Right ventricle myocardium superior (tissue), 1 donor: ENCODE measurements at regions of chr15 and their contacts with region 1.

Region 1: GRCh38 chr15:58749532-58750337 is at the start of gene ADAM10:
- DNase-seq: peak; percentile 99
- ATAC-seq: peak; percentile 98
- total RNA-seq, gene ADAM10: 69.7 TPM

Region 2: DNA sequence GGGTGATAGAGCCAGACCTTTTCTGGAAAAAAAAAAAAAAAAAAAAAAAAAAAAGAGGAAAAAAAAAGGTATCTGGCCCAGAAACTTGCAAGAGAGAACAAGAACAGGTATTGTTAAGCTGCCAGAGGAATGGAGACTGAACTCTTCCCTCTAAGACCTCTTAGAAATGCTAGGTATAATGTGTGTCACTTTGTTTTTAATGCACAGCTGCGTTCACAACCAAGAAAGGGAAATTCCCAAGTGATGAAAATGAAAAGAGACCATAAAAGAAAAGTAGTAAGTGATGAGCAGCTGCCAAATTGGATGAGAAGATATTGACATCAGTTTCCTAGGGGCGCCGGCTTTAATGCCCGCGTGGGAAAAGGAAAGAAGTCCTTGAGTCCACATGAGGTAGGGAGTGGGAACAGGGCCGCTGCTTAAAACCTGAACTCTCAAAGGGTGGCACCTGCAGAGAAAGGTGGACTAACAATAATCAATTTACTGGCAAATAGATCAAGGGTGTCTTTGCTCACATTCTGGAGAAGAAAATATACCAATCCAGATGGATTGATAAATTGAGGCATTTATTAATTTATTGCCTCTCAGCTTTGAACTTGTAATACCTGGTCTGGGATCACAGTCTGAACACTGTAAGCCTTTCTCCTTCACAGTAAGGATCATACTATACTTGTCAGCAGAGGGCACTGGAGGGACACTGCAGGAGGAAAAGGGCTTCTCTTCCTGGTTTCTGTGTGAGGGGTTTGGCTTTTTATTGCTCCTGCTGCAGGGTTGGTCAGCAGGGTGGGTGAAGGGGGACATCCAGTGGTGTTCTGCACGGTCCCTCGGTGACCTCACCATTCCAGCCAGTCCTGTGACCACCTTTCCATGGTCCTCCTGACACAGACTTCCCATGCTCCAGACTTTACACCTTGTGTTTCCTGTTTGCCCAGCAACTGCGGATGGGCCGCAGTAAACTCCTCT is 480.0 kb before region 1 on chr15:
- intact Hi-C with region 1: loop called (anchors 10 kb)
- DNase-seq: no peak
- ATAC-seq: peak; percentile 93

Region 3: DNA sequence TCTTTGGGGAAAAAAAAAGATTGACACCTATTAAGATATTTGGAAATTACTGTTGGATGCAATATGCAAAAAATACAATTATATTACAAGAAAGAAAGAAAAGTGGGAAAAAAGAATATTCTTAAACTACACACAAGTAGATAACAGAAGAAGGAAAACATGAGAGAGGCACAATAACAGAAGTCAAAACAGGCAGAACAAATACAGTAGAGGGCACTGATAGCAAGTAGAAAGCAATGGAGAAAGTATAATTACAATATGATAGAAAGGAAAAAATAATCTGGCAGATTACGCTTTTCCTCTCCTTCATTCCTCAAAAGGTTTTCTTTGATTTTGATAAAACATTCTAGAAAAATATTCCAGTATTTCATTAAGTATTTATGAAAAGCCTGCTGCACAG is 72.3 kb before region 1 on chr15:
- intact Hi-C with region 1: loop called (anchors 10 kb)
- DNase-seq: no peak
- ATAC-seq: no peak